CD4-positive, alpha-beta T cell (primary cell): ENCODE measurements at regions of chr6 and their contacts with region 1.

Region 1: DNA sequence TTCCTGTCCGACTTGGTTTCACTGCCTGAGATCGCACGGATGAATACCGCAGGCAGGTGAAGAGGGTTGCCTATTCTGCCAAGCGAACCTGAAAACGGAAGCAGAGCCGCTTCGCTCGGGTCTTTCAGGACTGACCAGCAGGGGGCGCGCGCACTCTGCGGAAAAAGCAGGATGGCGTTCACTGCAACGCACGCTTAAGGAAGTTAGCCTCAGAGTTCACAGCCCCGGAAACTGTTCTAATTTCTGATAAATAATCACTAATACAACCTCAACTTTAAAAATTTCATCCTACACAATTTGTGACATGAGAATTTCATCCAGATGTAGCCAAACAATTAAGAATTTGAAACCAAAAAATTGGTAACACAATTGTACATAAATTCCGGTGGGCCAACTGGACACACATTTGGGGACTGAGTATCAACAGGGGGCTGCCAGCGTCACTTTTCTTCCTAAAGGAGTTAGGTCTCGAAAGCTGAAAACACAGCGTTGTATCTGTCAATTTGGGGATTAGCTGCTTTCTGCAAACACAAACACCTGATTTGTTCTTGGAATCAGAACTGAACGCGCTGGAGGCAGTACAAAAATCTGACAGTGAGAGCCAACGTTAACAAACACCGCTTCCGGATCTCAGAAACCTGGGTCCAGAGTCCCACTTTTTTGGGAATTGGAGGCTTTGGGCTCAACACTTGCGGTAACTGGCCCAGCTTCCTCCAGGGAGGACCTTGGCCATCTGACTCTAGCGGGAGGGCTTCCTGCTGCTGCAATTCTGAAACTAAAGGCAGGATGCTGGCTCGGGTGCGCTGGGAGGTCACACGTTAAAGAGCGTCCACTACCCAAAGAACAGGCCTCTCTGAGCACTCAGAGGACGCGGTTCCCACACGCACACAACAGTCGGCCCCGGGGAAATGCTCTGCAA is 8.8 kb downstream of the PXDC1 start:
- DNase-seq: peak; percentile 71 to 97 (median 90)
- ATAC-seq: peak; percentile 95
- H3K4me3 ChIP-seq: peak overlapping the region; percentile 27
- H3K4me3 Mint-ChIP-seq: no peak overlapping the region
- H3K27ac ChIP-seq: no peak overlapping the region
- H3K27ac Mint-ChIP-seq: peak overlapping the region; percentile 2
- H3K4me1 ChIP-seq: peaks cover 11% of the 10 kb centered on the region
- H3K4me1 Mint-ChIP-seq: peaks cover 8% of the 10 kb centered on the region
- H3K27me3 ChIP-seq: peaks cover 0 to 9% of the 10 kb centered on the region in 2 experiments
- H3K27me3 Mint-ChIP-seq: peaks cover 19% of the 10 kb centered on the region
- CTCF ChIP-seq: peak; percentile 94

Region 2: GRCh38 chr6:3977875-3978711 is 235.4 kb after region 1 on chr6:
- CTCF ChIA-PET with region 1: interaction called, 7 read pairs
- POLR2A ChIA-PET with region 1: interaction called, 3 read pairs
- intact Hi-C with region 1: loop called in 1 of 2 experiments (anchors 1 kb)
- DNase-seq: peak; percentile 6 to 84 (median 31)
- ATAC-seq: peak; percentile 100
- H3K4me3 ChIP-seq: no peak overlapping the region
- H3K4me3 Mint-ChIP-seq: no peak overlapping the region
- H3K27ac ChIP-seq: no peak overlapping the region
- H3K27ac Mint-ChIP-seq: no peak overlapping the region
- H3K4me1 ChIP-seq: peaks cover 8% of the 10 kb centered on the region
- H3K4me1 Mint-ChIP-seq: peaks cover 17% of the 10 kb centered on the region
- H3K27me3 ChIP-seq: no peaks in the 10 kb centered on the region
- H3K27me3 Mint-ChIP-seq: no peaks in the 10 kb centered on the region
- CTCF ChIP-seq: peak; percentile 73

Region 3: GRCh38 chr6:4008324-4009047 is 265.8 kb after region 1 on chr6:
- CTCF ChIA-PET with region 1: no interaction called
- POLR2A ChIA-PET with region 1: no interaction called
- intact Hi-C with region 1: loop called (anchors 1 to 5 kb)
- DNase-seq: peak in 5 of 14 experiments; percentile 10 to 80 (median 68)
- ATAC-seq: peak; percentile 85
- H3K4me3 ChIP-seq: no peak overlapping the region
- H3K4me3 Mint-ChIP-seq: no peak overlapping the region
- H3K27ac ChIP-seq: no peak overlapping the region
- H3K27ac Mint-ChIP-seq: peak overlapping the region; percentile 10
- H3K4me1 ChIP-seq: peaks cover 15% of the 10 kb centered on the region
- H3K4me1 Mint-ChIP-seq: peaks cover 71% of the 10 kb centered on the region
- H3K27me3 ChIP-seq: no peaks in the 10 kb centered on the region
- H3K27me3 Mint-ChIP-seq: no peaks in the 10 kb centered on the region
- CTCF ChIP-seq: peak; percentile 70

Region 4: DNA sequence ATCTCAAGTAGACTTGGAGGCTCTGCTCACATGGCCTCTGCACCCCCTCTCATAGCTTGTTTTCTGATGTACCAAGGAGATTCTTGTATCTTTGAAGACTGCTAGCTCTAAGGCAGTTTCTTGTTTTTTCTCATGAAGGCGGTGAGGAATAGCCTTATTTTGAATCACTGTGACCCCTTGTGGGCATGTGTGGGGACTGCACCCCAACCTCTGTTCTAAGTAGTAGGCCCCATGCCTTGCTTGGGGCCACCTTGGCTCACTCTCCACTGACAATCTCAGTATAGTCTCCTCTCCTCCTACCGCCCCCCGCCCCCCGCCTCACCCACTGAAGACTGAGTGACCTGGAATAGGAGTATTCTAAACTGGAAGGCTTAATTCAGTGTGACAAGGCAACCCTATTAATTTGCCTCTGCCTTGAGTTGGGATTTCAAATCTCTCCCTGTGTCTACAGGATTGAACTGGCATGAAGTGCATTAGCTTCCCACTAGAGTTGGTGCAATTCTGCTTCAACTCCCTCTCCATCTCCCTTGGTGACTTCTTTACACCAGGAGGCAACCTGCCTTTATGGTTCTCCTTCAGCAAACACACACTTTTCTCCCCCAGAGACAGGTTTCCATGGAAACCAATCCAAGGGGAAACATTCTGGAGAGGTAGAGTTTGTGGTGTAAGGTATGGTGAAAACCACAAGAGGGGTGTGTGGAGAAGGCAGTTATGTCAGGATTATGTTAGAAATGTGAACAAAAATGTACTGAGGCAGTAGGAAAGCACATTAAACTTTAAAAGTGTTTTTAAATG is 468.1 kb after region 1 on chr6:
- CTCF ChIA-PET with region 1: no interaction called
- POLR2A ChIA-PET with region 1: no interaction called
- intact Hi-C with region 1: loop called (anchors 1 to 2 kb)
- DNase-seq: peak; percentile 22 to 66 (median 39)
- ATAC-seq: peak; percentile 81
- H3K4me3 ChIP-seq: no peak overlapping the region
- H3K4me3 Mint-ChIP-seq: no peak overlapping the region
- H3K27ac ChIP-seq: no peak overlapping the region
- H3K27ac Mint-ChIP-seq: peak overlapping the region; percentile 1
- H3K4me1 ChIP-seq: no peaks in the 10 kb centered on the region
- H3K4me1 Mint-ChIP-seq: peaks cover 26% of the 10 kb centered on the region
- H3K27me3 ChIP-seq: no peaks in the 10 kb centered on the region
- H3K27me3 Mint-ChIP-seq: peaks cover 4% of the 10 kb centered on the region
- CTCF ChIP-seq: peak; percentile 72